CD14-positive monocyte (primary cell): ENCODE measurements at regions of chr9 and their contacts with region 1.

Region 1: DNA sequence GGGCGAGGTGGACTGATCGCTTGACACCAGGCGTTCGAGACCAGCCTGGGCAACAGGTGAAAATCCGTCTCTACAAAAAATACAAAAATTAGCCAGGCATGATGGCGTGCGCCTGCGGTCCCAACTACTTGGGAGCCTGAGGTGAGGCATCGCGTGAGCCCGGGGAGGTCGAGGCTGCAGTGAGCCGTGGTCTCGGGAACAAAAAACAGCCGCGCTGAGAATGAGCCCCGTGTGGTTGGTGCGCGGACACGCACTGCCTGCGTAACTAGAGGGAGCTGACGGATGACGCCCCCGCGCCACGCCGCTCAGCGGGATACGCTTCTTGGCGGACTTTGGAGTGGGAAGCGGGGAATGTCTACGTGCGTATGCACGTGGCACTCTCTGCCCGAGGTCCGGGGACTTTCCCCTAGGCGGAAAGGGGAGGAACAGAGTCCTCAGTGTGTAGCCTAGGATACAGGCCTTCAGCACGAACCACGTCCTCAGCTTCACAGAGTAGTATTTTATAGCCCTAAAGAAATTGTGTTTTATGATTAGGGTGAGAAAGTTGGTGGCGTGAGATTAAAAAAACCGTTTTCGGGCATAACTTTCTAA is at the start of gene RMRP:
- DNase-seq: peak; percentile 94 to 99 (median 95)
- H3K4me3 ChIP-seq: peak within 1 kb of the TSS; percentile 83 to 94 (median 88)
- H3K4me3 Mint-ChIP-seq: peak within 1 kb of the TSS; percentile 87 to 90
- H3K27ac ChIP-seq: peak within 1 kb of the TSS; percentile 85 to 98
- H3K27ac Mint-ChIP-seq: peak within 1 kb of the TSS; percentile 95 to 100 (median 98)
- H3K4me1 ChIP-seq: peaks cover 29 to 43% of the 10 kb centered on the region in 2 donors
- H3K4me1 Mint-ChIP-seq: peaks cover 43% of the 10 kb centered on the region
- H3K27me3 ChIP-seq: no peaks in the 10 kb centered on the region
- H3K27me3 Mint-ChIP-seq: peaks cover 0 to 8% (median 5%) of the 10 kb centered on the region in 3 donors
- CTCF ChIP-seq: no peak
- polyA plus RNA-seq, gene RMRP: 13.3 TPM in 1 of 3 donors, not detected in the others

Region 2: GRCh38 chr9:35111001-35111933 is 546.4 kb before region 1 on chr9:
- intact Hi-C with region 1: loop called in 1 of 2 experiments (anchors 5 kb)
- DNase-seq: peak; percentile 98 to 99 (median 99)
- H3K4me3 ChIP-seq: peak overlapping the region; percentile 68 to 77 (median 69)
- H3K4me3 Mint-ChIP-seq: peak overlapping the region; percentile 86 to 96
- H3K27ac ChIP-seq: peak overlapping the region; percentile 94 to 95
- H3K27ac Mint-ChIP-seq: peak overlapping the region; percentile 99 to 100 (median 100)
- H3K4me1 ChIP-seq: peaks cover 50 to 58% of the 10 kb centered on the region in 2 donors
- H3K4me1 Mint-ChIP-seq: peaks cover 52% of the 10 kb centered on the region
- H3K27me3 ChIP-seq: no peaks in the 10 kb centered on the region
- H3K27me3 Mint-ChIP-seq: peaks cover 0 to 8% (median 0%) of the 10 kb centered on the region in 3 donors
- CTCF ChIP-seq: no peak

Region 3: DNA sequence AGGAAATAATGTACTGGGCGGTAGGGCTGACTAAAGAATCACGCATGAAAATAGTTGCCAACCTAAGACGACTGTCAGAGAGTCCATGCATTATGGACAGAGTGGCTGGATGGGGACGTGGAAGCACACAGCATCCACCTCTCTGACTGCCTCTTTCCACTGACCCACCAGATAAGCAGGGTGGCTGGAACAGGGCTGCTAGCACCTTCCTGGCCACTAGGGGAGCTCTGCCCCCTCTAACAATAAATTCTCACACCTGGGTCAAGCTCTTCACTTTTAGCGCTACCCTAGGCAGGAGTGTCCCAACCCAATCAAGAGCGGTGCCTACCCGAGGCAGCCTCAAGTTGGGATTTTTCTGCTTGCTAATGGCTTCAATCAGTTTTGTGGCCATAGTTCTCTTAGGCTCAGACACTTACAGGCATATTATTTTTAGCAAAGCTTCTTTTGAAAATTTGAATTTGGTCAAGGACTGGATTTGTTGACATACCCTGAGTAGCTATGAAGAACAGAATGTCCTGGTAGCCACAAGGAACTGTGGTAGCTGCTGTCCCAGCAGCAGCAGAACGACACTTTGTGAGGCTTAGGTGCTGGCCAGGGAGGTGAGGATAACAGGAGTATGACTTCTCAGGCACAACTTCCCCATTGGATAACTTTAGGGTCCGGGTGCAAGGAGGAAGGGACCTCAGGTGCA is 39.0 kb after region 1 on chr9:
- intact Hi-C with region 1: loop called in 1 of 2 experiments (anchors 5 kb)
- DNase-seq: peak; percentile 33 to 60 (median 57)
- H3K4me3 ChIP-seq: no peak overlapping the region
- H3K4me3 Mint-ChIP-seq: no peak overlapping the region
- H3K27ac ChIP-seq: no peak overlapping the region
- H3K27ac Mint-ChIP-seq: peak overlapping the region in 4 of 7 donors; percentile 22 to 87 (median 63)
- H3K4me1 ChIP-seq: peaks cover 0 to under 1% of the 10 kb centered on the region in 2 donors
- H3K4me1 Mint-ChIP-seq: no peaks in the 10 kb centered on the region
- H3K27me3 ChIP-seq: no peaks in the 10 kb centered on the region
- H3K27me3 Mint-ChIP-seq: peaks cover 0 to 3% (median 0%) of the 10 kb centered on the region in 3 donors
- CTCF ChIP-seq: peak; percentile 93

Region 4: DNA sequence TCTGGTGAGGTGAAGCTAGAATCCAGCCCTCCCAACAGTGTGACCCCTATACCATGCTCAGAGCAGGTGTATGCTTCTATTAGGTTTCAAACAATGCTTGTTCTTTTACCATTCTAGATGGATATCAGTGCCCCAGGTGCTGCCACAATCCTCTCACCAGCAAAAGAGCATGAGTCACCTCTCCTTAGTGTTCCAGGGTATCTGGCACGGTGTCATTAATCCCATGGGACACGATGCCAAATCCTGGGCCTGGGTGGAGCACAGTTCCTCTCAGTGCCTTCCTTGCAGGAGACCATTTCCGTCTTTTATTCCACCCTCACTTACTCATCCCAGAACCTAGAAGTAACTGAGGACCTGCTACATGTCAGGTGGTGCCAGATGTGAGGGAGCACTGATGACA is 213.9 kb after region 1 on chr9:
- intact Hi-C with region 1: no loop called
- DNase-seq: no peak
- H3K4me3 ChIP-seq: no peak overlapping the region
- H3K4me3 Mint-ChIP-seq: no peak overlapping the region
- H3K27ac ChIP-seq: no peak overlapping the region
- H3K27ac Mint-ChIP-seq: no peak overlapping the region
- H3K4me1 ChIP-seq: no peaks in the 10 kb centered on the region
- H3K4me1 Mint-ChIP-seq: peaks cover 4% of the 10 kb centered on the region
- H3K27me3 ChIP-seq: peaks cover 4 to 18% of the 10 kb centered on the region in 2 donors
- H3K27me3 Mint-ChIP-seq: peaks cover 11 to 20% (median 12%) of the 10 kb centered on the region in 3 donors
- CTCF ChIP-seq: no peak